GM12878 (cell line): ENCODE measurements at regions of chr19 and their contacts with region 1.

Region 1: GRCh38 chr19:6602729-6603114 is 11.8 kb upstream of the CD70 start:
- DNase-seq: no peak
- ATAC-seq: peak; percentile 14
- H3K4me3 ChIP-seq: peak overlapping the region; percentile 76; the same call in 1 of the 2 replicates
- H3K27ac ChIP-seq: peak overlapping the region; percentile 95
- H3K4me1 ChIP-seq: peaks cover 27% of the 10 kb centered on the region
- H3K27me3 ChIP-seq: no peaks in the 10 kb centered on the region
- CTCF ChIP-seq: no peak
- EP300 ChIP-seq: no peak
- POLR2A ChIP-seq: no peak
- RAD21 ChIP-seq: no peak

Region 2: DNA sequence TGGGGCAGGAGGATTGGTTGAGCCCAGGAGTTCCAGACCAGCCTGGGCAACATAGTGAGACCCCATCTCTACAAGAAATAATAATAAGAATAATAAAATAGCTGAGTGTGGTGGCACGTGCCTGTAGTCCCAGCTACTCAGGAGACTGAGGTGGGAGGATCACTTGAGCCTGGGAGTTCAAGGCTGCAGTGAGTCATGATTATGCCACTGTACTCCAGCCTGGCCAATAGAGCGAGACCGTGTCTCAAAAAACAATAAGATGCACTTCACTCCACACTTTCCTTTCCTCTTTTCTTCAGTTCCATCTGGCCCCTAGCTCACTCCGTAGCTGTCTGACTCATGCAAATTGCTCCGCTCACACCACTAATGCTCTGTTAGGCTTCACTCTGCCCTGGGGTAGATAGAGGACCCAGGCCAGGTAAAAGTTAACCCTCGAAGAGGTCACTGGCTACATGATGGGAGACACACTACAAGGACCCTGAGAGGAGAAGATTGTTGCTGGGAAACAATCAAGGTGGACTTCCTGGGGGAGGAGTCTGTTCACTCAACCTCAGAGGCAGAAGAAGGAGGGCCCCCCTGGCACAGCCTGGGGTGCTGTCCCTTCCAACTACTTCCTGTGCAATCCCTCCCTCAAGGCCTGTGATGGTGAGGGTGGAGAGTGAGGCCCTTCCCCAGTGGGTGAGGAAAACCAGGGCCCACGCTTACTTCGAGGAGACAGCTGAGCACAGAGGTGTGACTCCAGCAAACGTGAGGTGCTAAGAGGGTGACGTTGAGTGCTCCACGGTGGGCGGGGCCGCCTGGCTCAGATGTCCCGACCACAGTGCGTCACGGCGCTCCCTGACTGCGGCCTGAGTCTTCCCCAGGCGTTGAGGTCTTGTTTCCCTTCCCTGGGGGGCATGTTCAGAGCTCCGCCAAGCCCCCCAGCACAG is 80.7 kb before region 1 on chr19:
- CTCF ChIA-PET with region 1: interaction called, 13 read pairs
- POLR2A ChIA-PET with region 1: interaction called, 20 read pairs
- RAD21 ChIA-PET with region 1: interaction called, 31 read pairs
- SMC1A ChIA-PET with region 1: interaction called, 14 read pairs
- in situ Hi-C with region 1: no loop called
- intact Hi-C with region 1: no loop called
- DNase-seq: peak; percentile 95
- ATAC-seq: peak; percentile 70
- H3K4me3 ChIP-seq: peak overlapping the region; percentile 60
- H3K27ac ChIP-seq: peak overlapping the region; percentile 99
- H3K4me1 ChIP-seq: peaks cover 52% of the 10 kb centered on the region
- H3K27me3 ChIP-seq: no peaks in the 10 kb centered on the region
- CTCF ChIP-seq: no peak
- EP300 ChIP-seq: peak; percentile 85 to 86; a peak in 2 of 4 replicates
- POLR2A ChIP-seq: peak; percentile 82
- RAD21 ChIP-seq: no peak

Region 3: DNA sequence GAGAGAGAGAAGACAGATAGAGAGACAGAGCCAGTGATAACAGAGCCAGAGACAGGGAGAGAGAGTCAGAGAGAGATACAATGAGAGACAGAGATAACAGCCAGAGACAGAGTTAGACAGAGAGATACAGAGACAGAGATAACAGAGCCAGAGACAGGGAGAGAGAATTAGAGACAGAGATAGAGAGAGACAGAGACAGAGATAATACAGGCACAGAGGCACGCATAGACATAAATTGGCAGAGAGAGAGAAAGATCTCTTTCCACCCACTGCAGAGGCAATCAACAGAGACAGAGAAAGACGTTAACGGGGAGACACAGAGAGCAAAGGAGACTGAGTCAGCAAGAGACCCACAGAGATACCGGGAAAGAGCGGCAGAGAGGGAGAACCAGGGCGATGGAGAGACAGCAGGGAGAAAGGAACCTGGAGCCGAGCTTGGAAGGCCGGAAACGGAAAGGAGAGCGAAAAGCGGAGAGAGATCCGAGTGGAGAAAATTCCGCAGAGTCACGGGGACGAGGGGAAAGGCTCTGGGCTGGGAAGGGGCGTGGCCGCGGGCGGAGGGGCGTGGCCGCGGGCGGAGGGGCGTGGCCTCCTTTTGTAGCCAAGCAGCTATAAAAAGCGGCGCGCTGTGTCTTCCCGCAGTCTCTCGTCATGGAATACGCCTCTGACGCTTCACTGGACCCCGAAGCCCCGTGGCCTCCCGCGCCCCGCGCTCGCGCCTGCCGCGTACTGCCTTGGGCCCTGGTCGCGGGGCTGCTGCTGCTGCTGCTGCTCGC is 72.1 kb before region 1 on chr19 and contains the start of gene TNFSF9:
- CTCF ChIA-PET with region 1: interaction called, 3 read pairs
- POLR2A ChIA-PET with region 1: interaction called, 12 read pairs
- RAD21 ChIA-PET with region 1: interaction called, 15 read pairs
- SMC1A ChIA-PET with region 1: interaction called, 7 read pairs
- in situ Hi-C with region 1: no loop called
- intact Hi-C with region 1: loop called (anchors 2 kb)
- DNase-seq: no peak
- ATAC-seq: peak; percentile 55
- H3K4me3 ChIP-seq: peak within 1 kb of the TSS; percentile 99
- H3K27ac ChIP-seq: peak within 1 kb of the TSS; percentile 83
- H3K4me1 ChIP-seq: peaks cover 34% of the 10 kb centered on the region
- H3K27me3 ChIP-seq: no peaks in the 10 kb centered on the region
- CTCF ChIP-seq: no peak
- EP300 ChIP-seq: no peak
- POLR2A ChIP-seq: peak; percentile 98
- RAD21 ChIP-seq: no peak
- polyA plus RNA-seq, gene TNFSF9: 6.2 to 12.8 TPM

Region 4: GRCh38 chr19:6535558-6536137 is 67.1 kb before region 1 on chr19:
- CTCF ChIA-PET with region 1: interaction called, 3 read pairs
- POLR2A ChIA-PET with region 1: interaction called, 12 read pairs
- RAD21 ChIA-PET with region 1: interaction called, 8 read pairs
- SMC1A ChIA-PET with region 1: interaction called, 10 read pairs
- in situ Hi-C with region 1: no loop called
- intact Hi-C with region 1: no loop called
- DNase-seq: no peak
- ATAC-seq: no peak
- H3K4me3 ChIP-seq: 0 out of 2 replicates have a peak overlapping the region, but pooled peaks have one; percentile 17
- H3K27ac ChIP-seq: no peak overlapping the region
- H3K4me1 ChIP-seq: peaks cover 38% of the 10 kb centered on the region
- H3K27me3 ChIP-seq: no peaks in the 10 kb centered on the region
- CTCF ChIP-seq: no peak
- EP300 ChIP-seq: no peak
- POLR2A ChIP-seq: no peak
- RAD21 ChIP-seq: no peak

Region 5: DNA sequence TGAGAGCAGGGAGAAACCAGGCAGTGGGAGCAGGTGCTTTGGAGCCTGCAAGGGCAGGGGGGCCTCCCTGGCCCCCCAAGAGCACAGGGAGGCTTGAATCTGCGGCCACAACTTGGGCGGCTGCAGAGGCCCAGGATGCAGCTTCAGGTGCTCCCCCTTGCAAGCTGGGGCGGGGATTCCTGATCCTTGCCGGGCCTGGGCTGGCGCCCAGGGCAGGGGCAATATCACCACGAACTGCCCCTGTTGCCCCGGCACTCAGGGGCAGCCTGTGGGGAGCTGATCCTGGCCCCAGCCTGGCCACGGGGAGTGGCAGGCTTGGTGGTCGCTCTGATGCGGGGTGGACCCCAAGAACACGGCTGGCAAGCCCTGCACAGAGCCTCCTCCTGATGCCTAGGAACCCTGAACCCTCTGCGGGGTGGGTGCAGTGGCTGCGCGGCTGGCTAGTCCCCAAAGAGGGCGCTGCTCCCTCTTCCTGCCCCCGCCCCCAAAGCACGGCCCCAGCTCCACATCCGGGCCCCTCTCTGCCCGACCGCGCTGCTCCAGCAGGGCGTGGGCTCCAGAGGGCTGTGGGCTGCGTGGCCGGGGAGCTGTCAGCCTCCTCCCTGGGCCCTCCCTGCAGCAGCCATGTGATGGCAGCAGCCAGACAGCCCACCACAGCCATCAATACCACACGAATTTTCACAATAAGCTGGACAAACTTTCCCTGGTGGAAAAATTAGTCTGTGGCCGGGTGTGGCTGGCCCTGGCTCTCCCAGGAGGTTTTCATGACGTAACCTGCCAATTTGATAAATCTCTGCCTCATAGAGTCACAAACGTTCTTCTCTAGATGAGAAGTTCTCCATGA is 50.9 kb before region 1 on chr19:
- CTCF ChIA-PET with region 1: interaction called, 7 read pairs
- POLR2A ChIA-PET with region 1: interaction called, 5 read pairs
- RAD21 ChIA-PET with region 1: interaction called, 10 read pairs
- SMC1A ChIA-PET with region 1: interaction called, 9 read pairs
- in situ Hi-C with region 1: no loop called
- intact Hi-C with region 1: no loop called
- DNase-seq: no peak
- ATAC-seq: peak; percentile 91
- H3K4me3 ChIP-seq: no peak overlapping the region; the same call in 1 of the 2 replicates
- H3K27ac ChIP-seq: peak overlapping the region; percentile 72
- H3K4me1 ChIP-seq: peaks cover 35% of the 10 kb centered on the region
- H3K27me3 ChIP-seq: no peaks in the 10 kb centered on the region
- CTCF ChIP-seq: peak; percentile 23 to 60 (median 47)
- EP300 ChIP-seq: peak; percentile 25 to 36; a peak in 1 of 4 replicates
- POLR2A ChIP-seq: peak; percentile 63
- RAD21 ChIP-seq: peak; percentile 40

Region 6: DNA sequence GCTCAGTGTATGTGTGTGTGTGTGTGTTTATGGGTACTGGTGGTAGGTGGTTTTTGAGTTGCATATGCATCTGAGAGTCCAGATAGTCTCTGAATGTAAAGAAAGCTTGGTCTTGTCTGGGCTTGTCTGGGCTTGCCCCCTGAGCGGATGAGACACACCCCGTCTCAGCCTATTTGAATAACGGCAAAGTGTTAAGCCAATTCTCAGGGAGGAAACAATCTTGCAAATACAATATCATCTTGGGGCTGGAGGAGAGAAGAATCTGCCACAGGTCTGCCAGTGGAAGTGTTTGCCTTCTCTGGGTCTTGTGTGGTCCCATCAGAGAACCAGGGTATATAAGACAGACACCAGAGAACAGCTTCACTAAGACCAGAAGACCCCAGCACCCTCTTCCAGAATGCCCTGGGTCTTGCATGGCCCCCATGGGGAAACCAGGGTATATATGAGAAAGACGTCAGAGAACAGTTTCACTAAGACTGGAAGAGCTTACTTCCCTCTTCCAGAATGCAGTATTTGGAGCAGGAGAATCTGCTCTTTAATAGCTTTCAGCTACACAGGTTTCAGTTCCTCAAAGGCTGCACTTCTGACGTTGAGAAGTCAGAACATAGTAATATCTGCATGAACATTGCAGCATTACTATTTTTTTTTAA is 25.1 kb before region 1 on chr19:
- CTCF ChIA-PET with region 1: no interaction called
- POLR2A ChIA-PET with region 1: interaction called, 14 read pairs
- RAD21 ChIA-PET with region 1: interaction called, 22 read pairs
- SMC1A ChIA-PET with region 1: interaction called, 8 read pairs
- in situ Hi-C with region 1: no loop called
- intact Hi-C with region 1: no loop called
- DNase-seq: peak; percentile 96
- ATAC-seq: peak; percentile 89
- H3K4me3 ChIP-seq: peak overlapping the region; percentile 26; the same call in 1 of the 2 replicates
- H3K27ac ChIP-seq: peak overlapping the region; percentile 99
- H3K4me1 ChIP-seq: peaks cover 50% of the 10 kb centered on the region
- H3K27me3 ChIP-seq: no peaks in the 10 kb centered on the region
- CTCF ChIP-seq: no peak
- EP300 ChIP-seq: peak; percentile 81 to 98
- POLR2A ChIP-seq: peak; percentile 69
- RAD21 ChIP-seq: no peak

Region 7: GRCh38 chr19:6617368-6617767 is 14.6 kb after region 1 on chr19:
- CTCF ChIA-PET with region 1: interaction called, 7 read pairs
- POLR2A ChIA-PET with region 1: interaction called, 6 read pairs
- RAD21 ChIA-PET with region 1: interaction called, 3 read pairs
- SMC1A ChIA-PET with region 1: interaction called, 17 read pairs
- in situ Hi-C with region 1: no loop called
- intact Hi-C with region 1: no loop called
- DNase-seq: no peak
- ATAC-seq: no peak
- H3K4me3 ChIP-seq: no peak overlapping the region
- H3K27ac ChIP-seq: no peak overlapping the region
- H3K4me1 ChIP-seq: peaks cover 3% of the 10 kb centered on the region; the same call in 1 of the 2 replicates
- H3K27me3 ChIP-seq: no peaks in the 10 kb centered on the region
- CTCF ChIP-seq: no peak
- EP300 ChIP-seq: no peak
- POLR2A ChIP-seq: no peak
- RAD21 ChIP-seq: no peak